Mammary epithelial cell (primary cell): ENCODE measurements at regions of chr2 and their contacts with region 1.

Region 1: GRCh38 chr2:234044157-234044556 is 6.3 kb upstream of the SPP2 start:
- DNase-seq: peak; percentile 75
- H3K4me3 ChIP-seq: no peak overlapping the region
- H3K27ac ChIP-seq: no peak overlapping the region
- H3K4me1 ChIP-seq: peaks cover 16% of the 10 kb centered on the region
- H3K27me3 ChIP-seq: no peaks in the 10 kb centered on the region
- CTCF ChIP-seq: no peak

Region 2: DNA sequence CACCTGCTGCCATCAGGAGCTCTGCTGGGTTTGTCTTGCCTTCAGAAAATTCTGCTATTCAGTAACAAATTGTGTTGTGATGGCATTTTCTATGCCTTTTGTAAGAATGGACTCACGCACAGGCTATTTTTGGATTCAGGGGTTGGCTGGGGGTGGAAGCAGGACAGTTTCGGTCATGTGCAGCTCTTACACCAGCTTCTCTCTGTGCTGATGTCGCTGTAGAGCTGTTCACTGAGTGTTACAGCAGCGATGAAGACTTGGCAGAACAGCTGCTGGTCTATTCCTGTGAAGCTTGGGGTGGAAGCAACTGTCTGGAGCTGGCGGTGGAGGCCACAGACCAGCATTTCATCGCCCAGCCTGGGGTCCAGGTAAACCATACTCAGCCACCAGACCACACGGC is 77.8 kb before region 1 on chr2:
- CTCF ChIA-PET with region 1: no interaction called
- dilution Hi-C with region 1: no loop called
- in situ Hi-C with region 1: no loop called
- intact Hi-C with region 1: no loop called
- DNase-seq: no peak
- H3K4me3 ChIP-seq: no peak overlapping the region
- H3K27ac ChIP-seq: no peak overlapping the region
- H3K4me1 ChIP-seq: no peaks in the 10 kb centered on the region
- H3K27me3 ChIP-seq: no peaks in the 10 kb centered on the region
- CTCF ChIP-seq: no peak

Region 3: DNA sequence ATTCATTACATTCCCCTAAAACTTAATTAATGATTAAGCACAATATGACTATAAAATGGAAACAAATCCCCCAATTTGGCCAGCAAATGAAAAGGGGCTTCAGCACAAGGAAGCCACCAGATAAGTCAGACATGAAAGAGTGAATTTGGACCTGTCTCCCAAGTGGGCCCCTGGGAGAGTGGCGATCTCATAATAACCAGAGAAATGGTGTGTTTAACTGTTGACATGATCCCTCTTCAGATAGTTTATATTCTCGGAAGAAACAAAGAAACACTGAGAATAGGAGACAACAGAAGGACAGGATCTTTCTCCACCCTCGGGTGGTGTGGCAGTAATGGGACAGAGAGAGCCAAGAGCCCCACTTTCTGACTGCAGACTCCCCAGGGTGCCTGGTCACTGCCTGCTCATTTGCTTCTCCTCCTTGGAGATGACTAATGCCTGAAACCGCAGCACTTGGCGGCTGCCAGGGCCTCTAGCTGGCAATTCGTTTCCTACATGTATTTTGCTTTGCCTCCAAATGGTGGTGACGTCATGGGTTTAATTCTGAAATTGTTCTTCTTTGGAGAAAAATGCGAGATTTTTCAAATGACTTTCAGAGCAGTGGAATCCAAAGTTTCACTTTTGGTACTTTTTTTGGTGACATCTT is 40.1 kb before region 1 on chr2:
- CTCF ChIA-PET with region 1: no interaction called
- dilution Hi-C with region 1: no loop called
- in situ Hi-C with region 1: no loop called
- intact Hi-C with region 1: loop called (anchors 5 kb)
- DNase-seq: peak; percentile 89
- H3K4me3 ChIP-seq: no peak overlapping the region
- H3K27ac ChIP-seq: peak overlapping the region; percentile 34
- H3K4me1 ChIP-seq: peaks cover 12% of the 10 kb centered on the region
- H3K27me3 ChIP-seq: no peaks in the 10 kb centered on the region
- CTCF ChIP-seq: peak in 1 of 2 donors; percentile 1

Region 4: DNA sequence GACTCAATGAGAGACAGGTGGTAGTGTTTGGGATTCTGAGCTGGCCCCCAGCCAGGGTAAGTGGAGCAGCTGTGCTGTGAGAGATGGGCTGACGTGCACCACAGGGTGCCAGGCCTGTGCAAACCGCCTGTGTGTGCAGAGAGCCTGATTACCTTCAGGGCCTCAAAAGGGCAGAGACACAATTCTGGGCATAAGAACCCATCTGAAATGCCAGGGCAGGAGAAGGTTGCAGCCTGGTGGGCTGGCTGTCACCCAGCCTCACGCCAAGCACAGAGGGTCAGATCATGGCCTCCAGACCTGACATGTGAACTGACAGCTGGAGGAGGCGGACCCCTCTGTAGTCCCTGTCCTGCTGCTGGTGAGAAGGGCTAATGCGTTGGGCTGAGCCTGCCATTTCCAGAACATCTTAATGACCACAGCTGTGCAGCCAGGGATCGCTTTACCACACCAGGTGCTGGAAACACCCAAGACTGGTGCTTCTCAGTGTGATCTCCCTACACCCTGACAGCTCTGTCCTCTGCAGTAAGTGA is 351.8 kb after region 1 on chr2:
- CTCF ChIA-PET with region 1: no interaction called
- dilution Hi-C with region 1: no loop called
- in situ Hi-C with region 1: no loop called
- intact Hi-C with region 1: no loop called
- DNase-seq: no peak
- H3K4me3 ChIP-seq: no peak overlapping the region
- H3K27ac ChIP-seq: no peak overlapping the region
- H3K4me1 ChIP-seq: no peaks in the 10 kb centered on the region
- H3K27me3 ChIP-seq: no peaks in the 10 kb centered on the region
- CTCF ChIP-seq: no peak